Activated naive CD4-positive, alpha-beta T cell treated with anti-CD3 and anti-CD28 coated beads for 36 hours (primary cell): ENCODE measurements at regions of chr2 and their contacts with region 1.

Region 1: GRCh38 chr2:227826019-227826521 is 12.4 kb downstream of the CCL20 start:
- DNase-seq: no peak
- H3K4me3 Mint-ChIP-seq: no peak overlapping the region
- H3K27ac Mint-ChIP-seq: no peak overlapping the region
- H3K4me1 Mint-ChIP-seq: peaks cover 6% of the 10 kb centered on the region
- H3K27me3 Mint-ChIP-seq: peaks cover 20% of the 10 kb centered on the region

Region 2: GRCh38 chr2:227848586-227848985 is 22.5 kb after region 1 on chr2:
- CTCF ChIA-PET with region 1: no interaction called
- intact Hi-C with region 1: loop called (anchors 1 kb)
- DNase-seq: no peak
- H3K4me3 Mint-ChIP-seq: no peak overlapping the region
- H3K27ac Mint-ChIP-seq: peak overlapping the region; percentile 37
- H3K4me1 Mint-ChIP-seq: peaks cover 12% of the 10 kb centered on the region
- H3K27me3 Mint-ChIP-seq: peaks cover 7% of the 10 kb centered on the region